ENCODE measurements at regions of chr15 and their contacts with region 1.

Region 1: DNA sequence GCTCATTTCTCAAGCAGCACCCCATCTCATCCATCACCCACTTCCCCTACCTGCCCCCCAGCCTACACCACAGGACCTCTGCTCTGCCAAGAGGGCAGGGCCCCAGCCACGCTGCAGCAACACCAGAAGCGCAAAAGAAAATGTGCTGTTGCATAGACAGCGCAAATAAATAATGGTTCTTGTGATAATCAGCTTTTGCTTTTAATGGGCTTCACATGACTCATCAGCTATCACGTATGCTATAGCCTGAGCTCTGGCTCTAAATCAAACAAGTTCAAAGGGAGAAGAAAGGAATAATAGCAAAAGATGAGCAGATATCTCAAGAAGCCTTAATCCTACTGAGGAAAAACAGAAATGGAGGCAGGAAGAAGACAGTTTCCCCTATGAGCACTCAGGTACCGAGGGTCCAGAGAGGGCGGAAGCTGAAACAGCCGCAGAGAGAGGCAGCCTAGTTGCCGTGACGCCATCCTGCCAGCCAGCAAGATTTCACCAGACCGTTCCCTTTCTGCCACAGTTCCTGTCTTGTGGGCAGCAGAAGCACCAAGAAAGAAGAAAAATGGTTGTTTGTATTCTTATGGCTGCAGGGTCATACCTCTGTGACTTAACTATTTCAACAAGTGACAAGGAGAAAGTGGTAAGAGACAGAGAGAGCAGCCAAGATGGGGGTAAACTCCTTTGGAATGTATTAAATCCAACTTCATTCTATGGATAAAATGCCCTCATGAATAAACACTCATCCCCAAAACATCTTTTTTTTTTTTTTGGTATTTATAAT is 22.0 kb downstream of the RAB27A start:
- DNase-seq: peak; percentile 86
- ATAC-seq: peak; percentile 94
- H3K4me3 Mint-ChIP-seq: peak overlapping the region; percentile 64
- H3K27ac Mint-ChIP-seq: peak overlapping the region; percentile 95
- H3K4me1 Mint-ChIP-seq: peaks cover 85% of the 10 kb centered on the region
- H3K27me3 Mint-ChIP-seq: no peaks in the 10 kb centered on the region

Region 2: GRCh38 chr15:55196458-55197361 is 70.9 kb before region 1 on chr15 and contains the start of gene RSL24D1:
- CTCF ChIA-PET with region 1: no interaction called
- POLR2A ChIA-PET with region 1: interaction called, 15 read pairs
- DNase-seq: peak; percentile 98
- ATAC-seq: peak; percentile 98
- H3K4me3 Mint-ChIP-seq: no peak within 1 kb of the TSS
- H3K27ac Mint-ChIP-seq: no peak within 1 kb of the TSS
- H3K4me1 Mint-ChIP-seq: peaks cover 15% of the 10 kb centered on the region
- H3K27me3 Mint-ChIP-seq: no peaks in the 10 kb centered on the region
- total RNA-seq, gene RSL24D1: 79.6 to 85.2 TPM

Region 3: GRCh38 chr15:55255714-55256113 is 11.9 kb before region 1 on chr15:
- CTCF ChIA-PET with region 1: interaction called, 12 read pairs
- POLR2A ChIA-PET with region 1: interaction called, 26 read pairs
- DNase-seq: peak; percentile 53
- ATAC-seq: peak; percentile 69
- H3K4me3 Mint-ChIP-seq: peak overlapping the region; percentile 78
- H3K27ac Mint-ChIP-seq: peak overlapping the region; percentile 92
- H3K4me1 Mint-ChIP-seq: peaks cover 86% of the 10 kb centered on the region
- H3K27me3 Mint-ChIP-seq: no peaks in the 10 kb centered on the region

Region 4: GRCh38 chr15:55279746-55280351 is 12.3 kb after region 1 on chr15:
- CTCF ChIA-PET with region 1: interaction called, 27 read pairs
- POLR2A ChIA-PET with region 1: interaction called, 24 read pairs
- DNase-seq: peak; percentile 66
- ATAC-seq: peak; percentile 79
- H3K4me3 Mint-ChIP-seq: peak overlapping the region; percentile 57
- H3K27ac Mint-ChIP-seq: peak overlapping the region; percentile 97
- H3K4me1 Mint-ChIP-seq: peaks cover 93% of the 10 kb centered on the region
- H3K27me3 Mint-ChIP-seq: no peaks in the 10 kb centered on the region

Region 5: DNA sequence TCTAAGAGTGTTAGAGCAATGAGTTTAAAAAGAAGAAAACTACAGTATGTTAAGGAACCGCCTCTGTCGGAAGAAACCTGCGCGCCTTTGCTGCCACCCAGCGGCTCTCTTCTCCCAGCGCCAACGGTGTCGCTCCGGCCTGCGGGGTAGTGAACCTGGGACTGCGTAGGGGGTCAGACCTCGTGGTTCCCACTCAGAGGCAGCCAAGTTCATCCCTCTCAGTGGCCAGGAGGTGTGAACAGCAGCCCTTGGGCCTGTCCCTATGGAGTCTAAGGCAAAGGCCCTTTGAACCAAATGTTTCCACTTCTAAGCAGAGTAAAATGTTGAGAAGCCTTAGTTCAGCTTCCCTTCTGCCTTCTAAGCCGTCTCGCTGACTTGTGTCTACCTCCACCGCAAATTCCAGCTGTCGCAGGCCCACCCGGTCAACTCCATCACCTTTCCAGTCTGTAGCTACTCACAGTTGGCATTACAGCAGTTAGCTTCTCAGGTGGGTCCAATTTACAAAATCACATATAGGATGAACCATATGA is 23.0 kb after region 1 on chr15:
- CTCF ChIA-PET with region 1: interaction called, 10 read pairs
- POLR2A ChIA-PET with region 1: interaction called, 3 read pairs
- DNase-seq: peak; percentile 89
- ATAC-seq: peak; percentile 78
- H3K4me3 Mint-ChIP-seq: peak overlapping the region; percentile 86
- H3K27ac Mint-ChIP-seq: peak overlapping the region; percentile 86
- H3K4me1 Mint-ChIP-seq: peaks cover 33% of the 10 kb centered on the region
- H3K27me3 Mint-ChIP-seq: no peaks in the 10 kb centered on the region

Measured in activated CD8-positive, alpha-beta T cell treated with anti-CD3 and anti-CD28 coated beads, Interleukin-2, amount 10 ng/mL, durations not matched to agents 7 days and 5 days (primary cell).